ENCODE measurements at regions of chr9 and their contacts with region 1.

Region 1: GRCh38 chr9:136545966-136546698 is at the start of gene NOTCH1:
- DNase-seq: peak; percentile 96
- H3K4me3 Mint-ChIP-seq: peak within 1 kb of the TSS; percentile 95
- H3K27ac Mint-ChIP-seq: peak within 1 kb of the TSS; percentile 94
- H3K4me1 Mint-ChIP-seq: peaks cover 13% of the 10 kb centered on the region
- H3K27me3 Mint-ChIP-seq: no peaks in the 10 kb centered on the region
- total RNA-seq, gene NOTCH1: 108 and 113 TPM in 2 replicates

Region 2: GRCh38 chr9:136410500-136411287 is 135.4 kb before region 1 on chr9 and contains the starts of genes ENTR1 and PMPCA:
- intact Hi-C with region 1: loop called (anchors 5 kb)
- DNase-seq: peak; percentile 99
- H3K4me3 Mint-ChIP-seq: peak within 1 kb of the TSS; percentile 94
- H3K27ac Mint-ChIP-seq: peak within 1 kb of the TSS; percentile 95
- H3K4me1 Mint-ChIP-seq: peaks cover 40% of the 10 kb centered on the region
- H3K27me3 Mint-ChIP-seq: no peaks in the 10 kb centered on the region
- total RNA-seq, gene ENTR1: 56.4 and 60.0 TPM in 2 replicates
- total RNA-seq, gene PMPCA: 114 and 124 TPM in 2 replicates

Region 3: DNA sequence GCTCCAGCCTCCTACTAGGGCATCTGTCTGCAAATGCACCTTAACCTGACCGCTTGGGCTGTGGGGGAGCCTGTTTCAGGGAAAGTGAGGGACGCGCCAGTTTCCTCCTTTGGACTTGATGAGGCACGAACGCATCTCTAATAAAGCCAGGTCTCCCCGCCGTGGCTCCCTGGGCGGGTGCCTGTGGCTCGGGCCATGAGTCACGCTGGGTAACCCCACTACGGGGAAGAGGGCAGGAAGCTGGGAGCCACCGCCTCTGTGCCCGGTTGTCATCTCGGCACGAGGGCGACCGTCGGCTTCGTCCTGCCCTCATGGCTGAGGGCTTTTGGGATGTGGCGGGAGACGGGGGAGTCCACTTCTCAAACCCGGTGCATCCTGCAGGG is 12.4 kb before region 1 on chr9:
- intact Hi-C with region 1: loop called (anchors 1 kb)
- DNase-seq: peak; percentile 92
- H3K4me3 Mint-ChIP-seq: peak overlapping the region; percentile 67
- H3K27ac Mint-ChIP-seq: peak overlapping the region; percentile 89
- H3K4me1 Mint-ChIP-seq: peaks cover 36% of the 10 kb centered on the region
- H3K27me3 Mint-ChIP-seq: no peaks in the 10 kb centered on the region

Region 4: GRCh38 chr9:136631038-136632000 is 85.2 kb after region 1 on chr9:
- intact Hi-C with region 1: loop called (anchors 10 kb)
- DNase-seq: peak; percentile 93
- H3K4me3 Mint-ChIP-seq: no peak overlapping the region
- H3K27ac Mint-ChIP-seq: no peak overlapping the region
- H3K4me1 Mint-ChIP-seq: peaks cover 2% of the 10 kb centered on the region
- H3K27me3 Mint-ChIP-seq: peaks cover 6% of the 10 kb centered on the region